Activated naive CD4-positive, alpha-beta T cell treated with anti-CD3 and anti-CD28 coated beads for 36 hours (primary cell): ENCODE measurements at regions of chr2 and their contacts with region 1.

Region 1: GRCh38 chr2:179410552-179411356 is 146.1 kb upstream of the SESTD1 start:
- DNase-seq: peak; percentile 45
- H3K4me3 Mint-ChIP-seq: no peak overlapping the region
- H3K27ac Mint-ChIP-seq: no peak overlapping the region
- H3K4me1 Mint-ChIP-seq: no peaks in the 10 kb centered on the region
- H3K27me3 Mint-ChIP-seq: peaks cover 32% of the 10 kb centered on the region

Region 2: GRCh38 chr2:179218848-179219594 is 191.7 kb before region 1 on chr2:
- CTCF ChIA-PET with region 1: interaction called, 4 read pairs
- intact Hi-C with region 1: loop called (anchors 1 kb)
- DNase-seq: peak; percentile 70
- H3K4me3 Mint-ChIP-seq: no peak overlapping the region
- H3K27ac Mint-ChIP-seq: no peak overlapping the region
- H3K4me1 Mint-ChIP-seq: no peaks in the 10 kb centered on the region
- H3K27me3 Mint-ChIP-seq: no peaks in the 10 kb centered on the region

Region 3: DNA sequence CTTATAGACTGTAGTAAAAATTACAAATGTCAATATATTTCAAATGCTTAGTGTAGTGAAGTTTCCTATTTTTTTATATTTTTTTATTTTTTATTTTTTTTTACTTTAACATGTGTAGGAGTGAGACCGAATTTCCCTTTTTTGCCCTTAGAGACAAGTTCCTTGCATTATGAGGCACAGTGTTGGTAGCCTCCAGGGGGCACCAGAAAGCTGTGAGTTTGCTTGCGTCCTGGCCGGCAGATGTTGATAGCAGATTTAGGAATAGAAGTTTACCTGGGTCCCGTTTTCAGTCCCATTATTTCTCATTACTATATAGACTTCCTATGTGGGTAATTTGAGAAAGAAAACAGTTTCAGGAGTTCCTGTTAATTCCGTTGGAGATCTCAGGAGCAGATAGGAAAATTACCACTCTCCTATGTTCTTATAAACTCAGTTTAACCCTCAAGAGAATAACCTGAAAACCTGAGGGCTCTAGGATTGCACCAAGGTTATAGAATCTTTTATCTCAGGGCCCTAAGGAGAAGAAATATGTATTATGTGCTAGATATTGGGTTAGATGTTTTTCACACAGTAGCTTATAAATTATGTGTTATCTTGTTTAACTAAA is 11.4 kb after region 1 on chr2:
- CTCF ChIA-PET with region 1: interaction called, 15 read pairs
- intact Hi-C with region 1: no loop called
- DNase-seq: peak; percentile 72
- H3K4me3 Mint-ChIP-seq: no peak overlapping the region
- H3K27ac Mint-ChIP-seq: no peak overlapping the region
- H3K4me1 Mint-ChIP-seq: no peaks in the 10 kb centered on the region
- H3K27me3 Mint-ChIP-seq: peaks cover 8% of the 10 kb centered on the region

Region 4: DNA sequence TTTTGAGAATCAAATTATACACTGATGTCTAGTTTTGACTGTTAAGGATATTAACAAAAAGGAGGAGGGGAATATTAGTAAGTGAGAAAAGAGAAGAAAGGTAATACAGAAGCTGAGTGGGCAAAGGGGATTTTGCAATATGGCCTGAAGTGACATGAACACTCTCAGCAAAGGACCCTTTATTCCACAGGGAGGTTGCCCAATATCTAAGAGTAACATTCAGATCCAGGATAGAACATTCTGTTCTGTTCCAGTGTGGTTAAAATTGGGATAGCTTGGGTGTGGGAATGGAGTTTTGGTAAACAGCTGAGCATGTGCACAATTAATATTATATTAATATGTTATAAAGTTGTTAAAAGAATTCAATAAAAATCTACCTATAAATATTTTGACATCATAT is 330.6 kb after region 1 on chr2:
- CTCF ChIA-PET with region 1: no interaction called
- intact Hi-C with region 1: no loop called
- DNase-seq: no peak
- H3K4me3 Mint-ChIP-seq: no peak overlapping the region
- H3K27ac Mint-ChIP-seq: no peak overlapping the region
- H3K4me1 Mint-ChIP-seq: no peaks in the 10 kb centered on the region
- H3K27me3 Mint-ChIP-seq: peaks cover 14% of the 10 kb centered on the region